ENCODE measurements at regions of chr2 and their contacts with region 1.

Region 1: DNA sequence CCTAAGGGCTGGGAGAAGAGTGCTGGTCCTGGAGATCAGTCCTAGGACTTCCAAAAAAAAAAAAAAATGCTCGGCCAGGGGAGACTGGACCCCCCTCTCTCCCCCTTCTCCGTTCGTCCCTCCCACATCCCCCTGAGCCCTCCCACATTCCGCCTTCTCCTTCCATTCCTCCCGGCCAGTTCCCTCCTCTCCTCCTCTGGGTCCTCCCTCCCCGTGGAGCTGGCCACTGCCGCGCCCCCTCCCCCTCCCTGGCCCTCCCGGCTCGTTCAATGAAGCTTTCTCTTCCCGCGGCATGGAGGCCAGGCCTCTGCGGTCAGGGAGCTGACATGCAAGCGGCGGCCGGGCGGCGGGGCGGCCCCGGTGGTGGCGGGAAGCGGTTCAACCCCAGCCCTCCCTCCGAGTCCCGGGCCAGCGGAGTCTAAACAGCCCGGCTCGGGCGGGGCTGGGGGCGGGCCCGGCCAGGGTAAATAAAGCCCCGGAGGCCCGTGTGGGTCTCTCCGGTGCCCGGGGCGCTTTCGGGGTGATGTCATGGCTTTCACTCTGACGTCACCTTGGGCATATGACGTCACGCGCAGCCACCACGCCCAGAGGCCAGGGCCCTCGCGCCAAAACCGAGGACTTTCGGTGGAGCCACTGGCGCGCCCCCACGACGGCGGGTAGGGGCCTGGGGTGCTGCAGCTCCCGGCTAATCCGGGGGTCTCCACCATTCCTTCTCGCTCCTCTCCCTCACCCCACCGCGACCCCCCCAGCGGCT is at the start of gene LOXL3:
- DNase-seq: peak; percentile 86
- ATAC-seq: peak; percentile 64
- H3K4me3 Mint-ChIP-seq: peak within 1 kb of the TSS; percentile 91
- H3K27ac Mint-ChIP-seq: peak within 1 kb of the TSS; percentile 96
- H3K4me1 Mint-ChIP-seq: peaks cover 39% of the 10 kb centered on the region
- H3K27me3 Mint-ChIP-seq: peaks cover 22% of the 10 kb centered on the region
- total RNA-seq, gene LOXL3: 0.76 to 1.8 TPM

Region 2: GRCh38 chr2:74566754-74567085 is 12.7 kb after region 1 on chr2:
- CTCF ChIA-PET with region 1: interaction called, 13 read pairs
- DNase-seq: no peak
- ATAC-seq: no peak
- H3K4me3 Mint-ChIP-seq: no peak overlapping the region
- H3K27ac Mint-ChIP-seq: peak overlapping the region; percentile 75
- H3K4me1 Mint-ChIP-seq: peaks cover 38% of the 10 kb centered on the region
- H3K27me3 Mint-ChIP-seq: peaks cover 10% of the 10 kb centered on the region

Region 3: GRCh38 chr2:74653985-74654882 is 100.2 kb after region 1 on chr2 and contains the start of gene SEMA4F:
- CTCF ChIA-PET with region 1: no interaction called
- DNase-seq: peak; percentile 97
- ATAC-seq: peak; percentile 100
- H3K4me3 Mint-ChIP-seq: peak within 1 kb of the TSS; percentile 76
- H3K27ac Mint-ChIP-seq: peak within 1 kb of the TSS; percentile 67
- H3K4me1 Mint-ChIP-seq: peaks cover 16% of the 10 kb centered on the region
- H3K27me3 Mint-ChIP-seq: peaks cover 13% of the 10 kb centered on the region
- total RNA-seq, gene SEMA4F: 4.1 to 6.8 TPM

Measured in activated CD8-positive, alpha-beta memory T cell treated with anti-CD3 and anti-CD28 coated beads, Interleukin-2, amount 10 ng/mL, durations not matched to agents 7 days and 5 days (primary cell).